Activated CD4-positive, alpha-beta T cell treated with anti-CD3 and anti-CD28 coated beads for 36 hours (primary cell): ENCODE measurements at regions of chr3 and their contacts with region 1.

Region 1: GRCh38 chr3:51498876-51499738 is 708 bp downstream of the DCAF1 start:
- DNase-seq: peak; percentile 94
- ATAC-seq: peak; percentile 75
- H3K4me3 Mint-ChIP-seq: peak overlapping the region; percentile 88
- H3K27ac Mint-ChIP-seq: peak overlapping the region; percentile 97
- H3K4me1 Mint-ChIP-seq: peaks cover 16% of the 10 kb centered on the region
- H3K27me3 Mint-ChIP-seq: no peaks in the 10 kb centered on the region

Region 2: DNA sequence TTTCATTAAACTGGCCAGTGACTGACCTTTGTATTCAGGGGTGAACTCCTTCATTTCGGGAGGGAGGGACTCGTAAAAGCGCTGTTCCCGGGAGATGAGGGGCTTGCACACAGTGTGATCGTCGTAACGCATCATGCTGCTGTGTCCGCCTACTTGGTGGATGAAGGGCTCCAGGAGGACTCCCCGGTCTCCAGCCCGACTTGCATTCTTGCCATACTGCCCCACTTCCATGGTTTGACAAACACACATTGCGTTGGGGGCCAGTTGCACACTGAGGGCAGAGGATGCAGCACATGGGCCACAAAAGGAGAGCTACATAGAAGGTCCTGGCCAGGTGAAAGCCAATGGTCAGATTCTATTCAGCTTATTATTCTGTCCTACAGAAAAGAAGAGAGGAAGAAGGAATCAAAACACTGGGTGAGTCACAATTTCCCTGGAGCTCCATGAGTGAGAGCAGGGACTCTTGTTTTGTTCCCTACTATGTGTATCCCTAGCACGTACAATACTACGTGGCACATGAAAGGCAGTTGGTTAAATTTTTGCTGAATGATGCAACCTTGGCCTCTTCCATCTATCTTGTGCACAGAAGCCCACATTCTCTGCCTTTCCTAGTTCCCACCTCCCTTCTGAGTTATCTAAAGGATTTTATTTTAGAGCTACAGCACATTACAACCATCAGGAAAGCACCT is 1751.2 kb before region 1 on chr3:
- CTCF ChIA-PET with region 1: no interaction called
- POLR2A ChIA-PET with region 1: no interaction called
- intact Hi-C with region 1: no loop called
- DNase-seq: no peak
- ATAC-seq: no peak
- H3K4me3 Mint-ChIP-seq: no peak overlapping the region
- H3K27ac Mint-ChIP-seq: no peak overlapping the region
- H3K4me1 Mint-ChIP-seq: no peaks in the 10 kb centered on the region
- H3K27me3 Mint-ChIP-seq: no peaks in the 10 kb centered on the region

Region 3: GRCh38 chr3:51384726-51385473 is 114.2 kb before region 1 on chr3 and contains the start of gene MANF:
- CTCF ChIA-PET with region 1: interaction called, 19 read pairs
- POLR2A ChIA-PET with region 1: interaction called, 15 read pairs
- intact Hi-C with region 1: loop called (anchors 1 kb)
- DNase-seq: peak; percentile 99
- ATAC-seq: peak; percentile 97
- H3K4me3 Mint-ChIP-seq: peak within 1 kb of the TSS; percentile 93
- H3K27ac Mint-ChIP-seq: peak within 1 kb of the TSS; percentile 99
- H3K4me1 Mint-ChIP-seq: peaks cover 46% of the 10 kb centered on the region
- H3K27me3 Mint-ChIP-seq: no peaks in the 10 kb centered on the region
- total RNA-seq, gene MANF: 124 to 129 TPM

Region 4: DNA sequence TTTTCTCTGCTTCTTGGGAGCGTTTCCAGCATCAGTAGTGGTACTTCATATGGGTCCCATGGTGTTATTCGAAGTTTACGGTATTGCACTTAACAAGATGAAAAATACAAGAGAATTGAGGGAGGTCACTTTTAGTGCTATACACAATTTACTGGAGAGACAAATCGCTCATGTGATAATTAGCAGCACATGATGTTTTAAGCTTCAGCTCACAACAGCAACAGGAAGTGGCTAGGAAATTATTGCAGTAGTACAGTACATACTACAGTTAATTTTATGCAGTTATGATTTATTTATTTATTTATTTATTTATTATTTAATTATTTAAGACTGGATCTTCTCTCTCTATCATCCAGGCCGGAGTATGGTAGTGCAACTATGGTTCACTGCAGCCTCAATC is 15.1 kb after region 1 on chr3:
- CTCF ChIA-PET with region 1: interaction called, 12 read pairs
- POLR2A ChIA-PET with region 1: no interaction called
- intact Hi-C with region 1: no loop called
- DNase-seq: no peak
- ATAC-seq: no peak
- H3K4me3 Mint-ChIP-seq: no peak overlapping the region
- H3K27ac Mint-ChIP-seq: no peak overlapping the region
- H3K4me1 Mint-ChIP-seq: peaks cover 3% of the 10 kb centered on the region
- H3K27me3 Mint-ChIP-seq: no peaks in the 10 kb centered on the region

Region 5: DNA sequence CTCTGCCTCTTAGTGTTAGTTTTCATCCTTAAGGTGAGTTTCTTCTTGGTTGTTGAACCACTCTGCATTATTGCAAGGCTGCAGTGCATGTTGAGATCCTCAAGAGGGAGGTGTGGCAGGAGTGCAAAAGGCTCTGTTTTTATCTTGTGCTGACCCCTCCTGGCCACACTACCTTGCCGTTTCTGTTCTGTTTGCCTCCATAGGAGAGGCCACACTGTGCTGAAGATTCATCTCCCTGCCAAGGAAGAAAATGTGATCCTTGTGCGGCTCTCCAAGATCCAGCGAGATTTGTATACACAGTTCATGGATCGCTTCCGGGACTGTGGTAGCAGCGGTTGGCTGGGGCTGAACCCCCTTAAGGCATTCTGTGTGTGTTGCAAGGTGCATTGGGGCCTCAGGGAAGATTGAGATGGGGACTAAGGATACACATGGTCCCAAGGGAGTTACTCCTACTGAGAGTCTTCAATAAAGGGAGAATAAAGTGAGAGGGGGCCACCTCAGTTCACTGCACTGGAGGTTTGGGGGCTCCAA is 138.9 kb after region 1 on chr3:
- CTCF ChIA-PET with region 1: interaction called, 3 read pairs
- POLR2A ChIA-PET with region 1: no interaction called
- intact Hi-C with region 1: loop called in 1 of 2 experiments (anchors 1 kb)
- DNase-seq: peak; percentile 55
- ATAC-seq: peak; percentile 83
- H3K4me3 Mint-ChIP-seq: no peak overlapping the region
- H3K27ac Mint-ChIP-seq: no peak overlapping the region
- H3K4me1 Mint-ChIP-seq: no peaks in the 10 kb centered on the region
- H3K27me3 Mint-ChIP-seq: no peaks in the 10 kb centered on the region

Region 6: DNA sequence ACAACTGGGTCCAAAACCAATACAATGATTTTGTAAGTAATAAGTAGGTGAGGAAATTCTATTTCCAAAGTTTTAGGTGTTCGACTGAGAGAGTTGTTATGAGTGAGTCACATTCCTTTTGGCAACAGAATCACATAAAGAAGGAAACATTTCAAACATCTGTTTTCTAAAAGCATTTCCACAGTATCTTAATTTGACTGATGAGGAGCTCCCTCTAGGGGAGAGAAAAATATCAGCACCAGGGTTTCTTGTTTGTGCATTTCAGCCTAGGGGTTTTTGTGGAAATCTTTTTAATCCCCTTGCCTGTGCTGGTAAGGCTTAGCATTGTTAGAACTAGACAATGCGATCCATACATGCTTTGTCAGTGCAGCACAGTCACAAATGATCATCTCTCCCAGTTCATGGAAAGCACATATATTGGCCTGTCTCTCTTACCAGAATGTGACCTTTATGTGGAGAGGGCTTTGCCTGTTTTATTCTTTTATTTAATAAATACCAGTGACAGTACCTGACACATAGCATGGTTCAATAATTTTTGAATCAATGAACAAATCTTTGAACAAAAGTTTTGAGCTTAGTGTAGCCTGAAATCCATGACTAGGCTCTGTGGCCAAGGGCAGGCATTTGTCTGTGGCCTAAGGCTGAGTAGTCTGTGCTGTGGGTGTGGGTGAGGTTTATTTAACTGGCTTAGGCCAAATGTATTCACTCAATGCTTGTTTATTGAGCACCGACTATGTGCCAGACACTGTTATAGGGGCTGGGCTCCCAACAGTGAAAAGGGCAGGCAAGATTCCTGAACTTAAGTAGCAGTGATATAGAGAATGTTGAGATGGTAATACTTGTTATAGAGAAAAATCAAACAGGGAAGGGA is 301.0 kb after region 1 on chr3:
- CTCF ChIA-PET with region 1: interaction called, 17 read pairs
- POLR2A ChIA-PET with region 1: no interaction called
- intact Hi-C with region 1: loop called (anchors 1 kb)
- DNase-seq: no peak
- ATAC-seq: peak; percentile 53
- H3K4me3 Mint-ChIP-seq: no peak overlapping the region
- H3K27ac Mint-ChIP-seq: no peak overlapping the region
- H3K4me1 Mint-ChIP-seq: peaks cover 18% of the 10 kb centered on the region
- H3K27me3 Mint-ChIP-seq: peaks cover 12% of the 10 kb centered on the region